ENCODE measurements at regions of chr1 and their contacts with region 1.

Region 1: GRCh38 chr1:154324669-154325582 is at the start of gene ATP8B2:
- DNase-seq: peak; percentile 77 to 90 (median 88)
- ATAC-seq: peak; percentile 51 to 58
- H3K4me3 ChIP-seq: peak within 1 kb of the TSS; percentile 97
- H3K27ac ChIP-seq: peak within 1 kb of the TSS; percentile 87
- H3K4me1 ChIP-seq: peaks cover 13% of the 10 kb centered on the region
- H3K27me3 ChIP-seq: no peaks in the 10 kb centered on the region
- total RNA-seq, gene ATP8B2: 25.1 to 33.1 (median 27.3) TPM

Region 2: DNA sequence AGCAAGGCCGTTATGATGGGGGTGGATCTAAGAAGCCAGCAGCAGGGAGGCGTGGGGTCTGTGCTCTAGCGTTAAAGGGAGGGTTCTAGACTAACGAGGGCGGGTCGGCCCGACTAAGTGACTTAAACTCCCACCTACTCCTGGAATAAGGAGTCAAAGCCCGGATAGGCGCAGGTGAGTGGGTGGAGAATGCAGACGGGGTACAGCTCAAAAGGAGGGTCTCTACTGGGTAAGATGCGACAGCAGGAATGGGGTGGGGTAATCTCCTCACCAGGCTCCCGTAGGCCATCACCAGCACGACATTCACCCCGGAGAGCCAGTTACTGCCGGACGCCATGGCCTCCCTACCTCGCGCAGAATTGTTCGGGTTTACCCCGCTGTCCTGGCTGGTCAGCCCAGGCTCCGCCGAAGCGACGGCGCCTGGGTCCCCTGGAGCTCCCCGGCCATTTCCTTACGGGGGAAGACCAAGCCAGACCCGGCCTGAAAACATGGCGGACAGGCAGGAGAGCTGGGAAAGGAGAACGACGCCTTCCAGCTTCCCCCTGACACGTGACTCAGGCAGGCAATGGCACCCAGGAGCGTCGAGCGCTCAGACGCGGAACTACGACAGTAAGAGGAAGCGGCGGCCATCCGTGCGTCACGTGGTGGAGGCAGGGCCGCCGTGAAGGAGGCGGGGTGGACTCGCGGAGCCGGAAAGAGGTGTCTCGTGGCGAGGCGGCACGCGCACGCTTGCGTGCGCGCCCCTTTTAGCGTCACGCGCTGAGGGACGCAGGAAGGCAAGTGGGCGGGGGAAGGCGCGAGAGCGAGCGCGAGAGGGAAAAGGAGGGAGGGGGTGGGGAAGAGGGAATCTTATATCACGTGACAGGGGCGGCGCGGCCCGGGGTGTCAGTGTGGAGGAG is 104.6 kb before region 1 on chr1 and contains the start of gene UBAP2L:
- intact Hi-C with region 1: loop called in 1 of 4 experiments (anchors 10 kb)
- DNase-seq: peak; percentile 100
- ATAC-seq: peak; percentile 98 to 99
- H3K4me3 ChIP-seq: peak within 1 kb of the TSS; percentile 96
- H3K27ac ChIP-seq: peak within 1 kb of the TSS; percentile 99
- H3K4me1 ChIP-seq: no peaks in the 10 kb centered on the region
- H3K27me3 ChIP-seq: no peaks in the 10 kb centered on the region
- total RNA-seq, gene UBAP2L: 103 to 112 (median 107) TPM

Measured in right cardiac atrium (tissue), 5 donors.